Right cardiac atrium (tissue), 5 donors: ENCODE measurements at regions of chr12 and their contacts with region 1.

Region 1: DNA sequence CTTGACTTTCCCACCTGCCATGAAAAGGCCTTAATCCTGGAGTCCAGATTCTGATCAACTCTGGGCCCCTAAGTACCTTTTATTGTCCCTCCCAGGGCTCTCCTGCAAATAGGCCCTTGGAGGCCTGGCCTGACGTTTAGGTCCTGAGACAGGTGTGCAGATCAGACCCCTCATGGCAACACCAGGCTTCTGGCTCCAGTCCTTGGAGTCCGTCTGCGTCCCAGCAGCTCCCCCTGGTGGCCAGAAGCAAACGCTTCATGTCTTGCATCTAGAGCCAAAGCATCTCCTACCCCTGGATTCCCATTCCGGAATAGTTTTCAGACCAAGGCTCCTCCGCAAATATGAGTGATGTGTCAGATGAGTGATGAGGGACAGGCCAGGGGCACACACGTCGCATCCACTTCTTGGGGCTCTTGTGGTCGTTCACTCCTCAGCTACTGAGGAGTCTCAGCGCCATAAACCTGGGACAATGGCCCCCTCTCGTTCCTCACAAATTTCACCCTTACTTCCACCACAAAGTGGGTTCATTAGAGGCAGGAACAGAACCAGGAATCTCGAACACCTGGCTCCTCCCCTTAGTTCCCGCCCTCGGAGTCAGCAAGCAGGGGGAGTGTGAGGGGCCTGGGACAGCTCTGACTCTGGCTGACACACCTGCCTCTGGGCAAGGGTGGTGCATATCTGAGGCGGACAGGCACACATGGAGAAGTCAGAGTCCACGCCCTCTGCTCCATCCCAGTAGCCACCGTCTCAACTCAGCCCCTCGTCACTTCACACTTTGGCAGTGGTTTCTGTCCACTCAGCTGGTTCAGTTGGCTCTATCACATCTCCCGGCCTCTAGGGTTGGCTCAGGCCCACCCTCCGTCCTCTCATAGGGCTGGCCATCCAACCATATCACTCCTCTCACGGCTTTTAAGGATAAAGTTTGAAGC is 77.9 kb upstream of the PWP1 start:
- DNase-seq: peak; percentile 83 to 90 (median 89)
- ATAC-seq: peak; percentile 70 to 81
- H3K4me3 ChIP-seq: no peak overlapping the region
- H3K27ac ChIP-seq: no peak overlapping the region
- H3K4me1 ChIP-seq: no peaks in the 10 kb centered on the region
- H3K27me3 ChIP-seq: no peaks in the 10 kb centered on the region

Region 2: DNA sequence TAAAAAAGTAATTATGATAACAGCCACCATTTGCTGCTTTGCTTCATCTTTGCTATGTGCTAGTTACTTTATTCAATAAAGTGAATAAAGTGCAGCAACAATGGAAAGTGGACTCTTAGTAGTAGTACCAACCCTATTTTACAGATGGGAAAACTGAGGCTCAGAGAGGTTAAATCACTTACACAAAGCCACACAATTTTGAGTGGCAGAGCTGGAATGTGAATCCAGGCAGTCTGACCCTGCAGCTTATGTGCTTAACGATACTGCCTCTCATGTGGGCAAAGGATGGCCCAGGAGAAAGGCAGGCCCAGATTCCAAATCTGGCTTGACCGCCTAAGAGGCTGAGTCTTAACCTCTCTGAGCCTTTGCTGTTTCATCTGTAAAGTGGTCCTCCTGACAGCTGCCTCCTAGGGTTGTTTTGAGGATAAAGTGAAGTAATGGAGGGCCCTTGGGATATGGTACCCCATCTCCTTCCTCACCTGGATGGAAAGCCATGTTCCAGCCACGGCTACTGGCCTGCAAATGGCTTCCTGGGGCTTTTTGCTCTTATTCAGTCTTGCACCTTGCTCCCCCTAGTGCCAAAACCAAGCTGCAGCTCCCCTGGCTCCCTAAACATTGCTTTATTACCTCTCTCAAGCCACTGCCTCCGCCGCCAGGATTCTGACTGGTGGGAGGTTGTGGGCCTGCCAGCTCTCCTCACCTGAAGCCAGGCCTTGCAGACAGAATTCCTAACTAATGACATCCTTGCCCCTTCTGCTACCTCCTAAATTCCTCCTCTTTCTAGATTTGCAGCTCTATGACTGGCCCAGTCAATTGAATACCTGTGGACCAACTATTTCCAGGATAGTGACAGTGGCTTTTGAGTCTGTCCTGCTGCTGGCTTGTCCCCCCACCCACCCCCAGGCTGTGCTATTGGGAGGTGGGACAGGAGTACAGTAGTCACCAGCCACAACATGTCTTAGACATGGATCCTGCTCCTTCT is 205.4 kb before region 1 on chr12:
- intact Hi-C with region 1: loop called in 1 of 4 experiments (anchors 10 kb)
- DNase-seq: peak in 2 of 3 donors; percentile 58 to 61
- ATAC-seq: no peak
- H3K4me3 ChIP-seq: no peak overlapping the region
- H3K27ac ChIP-seq: no peak overlapping the region
- H3K4me1 ChIP-seq: no peaks in the 10 kb centered on the region
- H3K27me3 ChIP-seq: no peaks in the 10 kb centered on the region

Region 3: GRCh38 chr12:107818984-107819383 is 211.3 kb after region 1 on chr12:
- intact Hi-C with region 1: no loop called
- DNase-seq: no peak
- ATAC-seq: no peak
- H3K4me3 ChIP-seq: no peak overlapping the region
- H3K27ac ChIP-seq: no peak overlapping the region
- H3K4me1 ChIP-seq: no peaks in the 10 kb centered on the region
- H3K27me3 ChIP-seq: no peaks in the 10 kb centered on the region